B cell (primary cell): ENCODE measurements at regions of chr11 and their contacts with region 1.

Region 1: DNA sequence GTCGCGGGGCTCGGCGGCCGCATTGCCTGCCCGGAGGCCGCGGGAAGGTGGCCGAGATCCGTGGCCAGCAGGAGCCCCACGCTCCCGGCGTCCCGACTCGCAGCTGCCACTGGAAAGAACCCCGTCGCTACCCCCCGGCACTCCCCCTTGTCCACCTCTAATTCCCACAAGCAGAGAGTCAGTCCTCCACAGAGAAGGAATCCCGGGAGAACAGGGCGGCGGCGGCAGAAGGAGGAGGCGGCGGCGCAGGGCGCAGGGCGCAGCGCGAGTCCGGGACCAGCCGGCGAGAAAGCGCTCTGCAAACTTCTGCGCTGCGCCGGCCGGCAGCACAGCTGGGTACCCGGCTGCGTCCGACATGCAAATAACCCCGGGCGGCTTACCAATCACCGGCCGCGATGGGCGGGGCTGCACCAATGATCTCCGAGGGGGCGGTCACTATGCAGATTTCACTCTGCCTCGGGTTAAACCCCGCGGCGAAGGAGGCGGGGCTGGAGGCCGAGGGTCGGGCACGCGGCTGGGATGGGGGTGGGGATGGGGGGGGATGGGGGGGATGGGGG is at the start of gene ABTB2:
- DNase-seq: peak; percentile 96
- ATAC-seq: peak; percentile 89
- H3K4me3 ChIP-seq: peak within 1 kb of the TSS; percentile 56 to 70 (median 66)
- H3K4me3 Mint-ChIP-seq: peak within 1 kb of the TSS; percentile 90
- H3K27ac ChIP-seq: peak within 1 kb of the TSS in 1 of 2 donors; percentile 43
- H3K27ac Mint-ChIP-seq: peak within 1 kb of the TSS; percentile 88
- H3K4me1 ChIP-seq: peaks cover 18 to 33% of the 10 kb centered on the region in 2 donors
- H3K4me1 Mint-ChIP-seq: peaks cover 28% of the 10 kb centered on the region
- H3K27me3 ChIP-seq: peaks cover 0 to 49% (median 41%) of the 10 kb centered on the region in 4 experiments
- H3K27me3 Mint-ChIP-seq: peaks cover 54% of the 10 kb centered on the region
- CTCF ChIP-seq: no peak
- total RNA-seq, gene ABTB2: 4.5 and 5.9 TPM in 2 replicates

Region 2: DNA sequence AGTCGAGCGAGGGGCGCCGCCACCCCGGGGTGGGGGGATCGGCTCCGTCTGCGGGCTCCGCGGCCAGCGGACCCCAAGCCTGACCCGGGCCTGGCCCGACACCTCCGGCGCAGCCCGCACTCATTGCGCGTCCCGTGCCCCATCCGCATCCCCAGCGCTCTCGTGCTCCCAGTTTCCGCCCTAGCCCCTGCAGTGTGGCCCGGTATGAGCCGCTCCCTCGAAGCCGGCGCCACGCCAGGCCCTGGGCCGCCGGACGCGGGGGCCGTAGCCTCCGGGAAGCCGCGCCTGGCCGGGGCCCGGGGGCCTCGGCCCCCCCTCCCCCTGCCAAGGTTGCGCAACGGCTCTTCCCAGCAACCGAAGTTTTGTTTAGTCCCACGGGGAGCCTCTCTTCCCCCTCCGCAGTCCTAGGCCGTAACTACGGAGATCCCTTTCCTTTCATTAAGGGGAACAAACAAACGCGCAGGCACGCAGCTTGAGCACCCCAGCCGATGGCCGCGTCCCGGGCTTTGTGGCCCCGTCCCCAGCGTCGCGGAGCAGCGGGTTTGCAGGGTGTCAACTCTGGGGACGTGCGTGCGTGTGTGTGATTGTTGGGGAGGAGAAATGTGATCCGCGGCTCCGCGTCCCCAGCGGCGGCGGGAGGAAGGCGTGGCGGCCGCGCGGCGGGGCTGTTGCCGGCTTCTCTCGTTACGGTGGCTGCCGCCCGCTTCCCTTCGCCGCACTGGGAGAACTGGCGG is 1099.7 kb before region 1 on chr11:
- CTCF ChIA-PET with region 1: no interaction called
- POLR2A ChIA-PET with region 1: no interaction called
- intact Hi-C with region 1: loop called (anchors 5 kb)
- DNase-seq: peak; percentile 86
- ATAC-seq: peak; percentile 34
- H3K4me3 ChIP-seq: peak overlapping the region; percentile 78 to 97 (median 90)
- H3K4me3 Mint-ChIP-seq: peak overlapping the region; percentile 93
- H3K27ac ChIP-seq: peak overlapping the region; percentile 98 to 99
- H3K27ac Mint-ChIP-seq: peak overlapping the region; percentile 100
- H3K4me1 ChIP-seq: peaks cover 22 to 26% of the 10 kb centered on the region in 2 donors
- H3K4me1 Mint-ChIP-seq: peaks cover 49% of the 10 kb centered on the region
- H3K27me3 ChIP-seq: no peaks in the 10 kb centered on the region
- H3K27me3 Mint-ChIP-seq: no peaks in the 10 kb centered on the region
- CTCF ChIP-seq: no peak

Region 3: DNA sequence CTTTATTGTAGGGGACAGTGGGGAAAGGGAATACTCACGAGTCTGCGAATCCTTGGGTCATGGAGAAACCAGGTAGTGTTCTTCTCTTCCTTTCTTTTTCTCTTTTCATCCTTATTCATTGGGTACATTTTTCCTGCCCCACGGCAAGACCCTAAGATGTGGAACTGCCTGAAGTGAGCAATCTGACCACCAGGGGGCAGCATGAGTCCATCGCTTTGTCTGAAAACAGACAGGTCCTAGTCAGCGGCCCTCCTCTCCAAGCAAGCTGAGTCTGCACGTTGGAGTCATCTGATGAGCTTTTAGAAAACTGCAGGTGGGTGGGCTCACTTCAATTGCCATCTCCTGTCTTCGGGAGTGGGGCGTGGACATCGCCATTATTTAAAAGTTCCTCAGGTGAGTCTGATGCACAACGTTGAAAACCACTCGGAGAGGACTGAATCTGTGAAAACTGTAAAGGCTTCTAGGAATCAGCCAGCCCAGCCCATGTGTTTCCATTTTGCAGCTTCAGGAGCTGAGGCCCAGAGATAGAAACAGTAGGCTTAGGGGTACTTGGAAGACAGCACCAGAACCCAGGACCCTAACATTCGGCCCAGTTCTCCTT is 549.5 kb before region 1 on chr11:
- CTCF ChIA-PET with region 1: interaction called, 3 read pairs
- POLR2A ChIA-PET with region 1: no interaction called
- intact Hi-C with region 1: loop called (anchors 1 kb)
- DNase-seq: peak; percentile 85
- ATAC-seq: peak; percentile 95
- H3K4me3 ChIP-seq: no peak overlapping the region
- H3K4me3 Mint-ChIP-seq: no peak overlapping the region
- H3K27ac ChIP-seq: no peak overlapping the region
- H3K27ac Mint-ChIP-seq: no peak overlapping the region
- H3K4me1 ChIP-seq: no peaks in the 10 kb centered on the region
- H3K4me1 Mint-ChIP-seq: no peaks in the 10 kb centered on the region
- H3K27me3 ChIP-seq: peaks cover 0 to 6% (median 1%) of the 10 kb centered on the region in 4 experiments
- H3K27me3 Mint-ChIP-seq: peaks cover 21% of the 10 kb centered on the region
- CTCF ChIP-seq: peak; percentile 95

Region 4: DNA sequence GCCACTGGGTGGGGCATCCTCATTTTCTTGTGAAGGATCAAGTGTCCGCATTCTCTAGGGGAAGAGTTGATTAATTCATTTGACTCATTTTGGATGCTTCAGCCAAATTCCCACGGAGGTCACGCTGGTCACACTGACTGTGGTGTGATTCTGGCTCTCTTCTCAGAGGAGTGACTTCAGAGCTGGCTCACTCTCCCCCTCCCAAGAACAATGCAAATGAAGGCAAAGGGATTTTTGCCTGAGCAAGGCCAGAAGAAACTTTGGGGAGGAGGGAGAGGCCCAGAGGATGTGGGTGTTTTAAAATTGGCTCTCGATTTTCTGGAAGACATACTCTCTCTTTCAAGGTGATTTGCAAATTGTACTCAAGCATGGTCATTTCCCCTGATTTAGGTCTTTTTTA is 414.8 kb before region 1 on chr11:
- CTCF ChIA-PET with region 1: no interaction called
- POLR2A ChIA-PET with region 1: no interaction called
- intact Hi-C with region 1: no loop called
- DNase-seq: no peak
- ATAC-seq: no peak
- H3K4me3 ChIP-seq: no peak overlapping the region
- H3K4me3 Mint-ChIP-seq: no peak overlapping the region
- H3K27ac ChIP-seq: no peak overlapping the region
- H3K27ac Mint-ChIP-seq: no peak overlapping the region
- H3K4me1 ChIP-seq: peaks cover 13 to 25% of the 10 kb centered on the region in 2 donors
- H3K4me1 Mint-ChIP-seq: peaks cover 30% of the 10 kb centered on the region
- H3K27me3 ChIP-seq: no peaks in the 10 kb centered on the region
- H3K27me3 Mint-ChIP-seq: peaks cover 4% of the 10 kb centered on the region
- CTCF ChIP-seq: no peak

Region 5: GRCh38 chr11:34051349-34052035 is 306.3 kb before region 1 on chr11 and contains the start of gene CAPRIN1:
- CTCF ChIA-PET with region 1: no interaction called
- POLR2A ChIA-PET with region 1: no interaction called
- intact Hi-C with region 1: loop called (anchors 1 kb)
- DNase-seq: peak; percentile 94
- ATAC-seq: peak; percentile 67
- H3K4me3 ChIP-seq: peak within 1 kb of the TSS; percentile 90 to 98 (median 95)
- H3K4me3 Mint-ChIP-seq: peak within 1 kb of the TSS; percentile 97
- H3K27ac ChIP-seq: peak within 1 kb of the TSS; percentile 99 to 100
- H3K27ac Mint-ChIP-seq: peak within 1 kb of the TSS; percentile 96
- H3K4me1 ChIP-seq: peaks cover 27 to 30% of the 10 kb centered on the region in 2 donors
- H3K4me1 Mint-ChIP-seq: peaks cover 28% of the 10 kb centered on the region
- H3K27me3 ChIP-seq: no peaks in the 10 kb centered on the region
- H3K27me3 Mint-ChIP-seq: no peaks in the 10 kb centered on the region
- CTCF ChIP-seq: no peak
- total RNA-seq, gene CAPRIN1: 132 and 133 TPM in 2 replicates

Region 6: GRCh38 chr11:34234086-34234740 is 123.6 kb before region 1 on chr11:
- CTCF ChIA-PET with region 1: interaction called, 6 read pairs
- POLR2A ChIA-PET with region 1: no interaction called
- intact Hi-C with region 1: loop called (anchors 1 kb)
- DNase-seq: peak; percentile 87
- ATAC-seq: peak; percentile 93
- H3K4me3 ChIP-seq: no peak overlapping the region
- H3K4me3 Mint-ChIP-seq: peak overlapping the region; percentile 69
- H3K27ac ChIP-seq: peak overlapping the region; percentile 50 to 64
- H3K27ac Mint-ChIP-seq: peak overlapping the region; percentile 84
- H3K4me1 ChIP-seq: peaks cover 15 to 23% of the 10 kb centered on the region in 2 donors
- H3K4me1 Mint-ChIP-seq: peaks cover 41% of the 10 kb centered on the region
- H3K27me3 ChIP-seq: no peaks in the 10 kb centered on the region
- H3K27me3 Mint-ChIP-seq: no peaks in the 10 kb centered on the region
- CTCF ChIP-seq: no peak

Region 7: GRCh38 chr11:34318111-34319037 is 39.4 kb before region 1 on chr11:
- CTCF ChIA-PET with region 1: no interaction called
- POLR2A ChIA-PET with region 1: no interaction called
- intact Hi-C with region 1: no loop called
- DNase-seq: no peak
- ATAC-seq: no peak
- H3K4me3 ChIP-seq: no peak overlapping the region
- H3K4me3 Mint-ChIP-seq: no peak overlapping the region
- H3K27ac ChIP-seq: no peak overlapping the region
- H3K27ac Mint-ChIP-seq: no peak overlapping the region
- H3K4me1 ChIP-seq: no peaks in the 10 kb centered on the region
- H3K4me1 Mint-ChIP-seq: peaks cover under 1% of the 10 kb centered on the region
- H3K27me3 ChIP-seq: no peaks in the 10 kb centered on the region
- H3K27me3 Mint-ChIP-seq: no peaks in the 10 kb centered on the region
- CTCF ChIP-seq: no peak

Region 8: GRCh38 chr11:34407121-34407786 is 49.5 kb after region 1 on chr11:
- CTCF ChIA-PET with region 1: no interaction called
- POLR2A ChIA-PET with region 1: no interaction called
- intact Hi-C with region 1: no loop called
- DNase-seq: no peak
- ATAC-seq: no peak
- H3K4me3 ChIP-seq: no peak overlapping the region
- H3K4me3 Mint-ChIP-seq: no peak overlapping the region
- H3K27ac ChIP-seq: no peak overlapping the region
- H3K27ac Mint-ChIP-seq: no peak overlapping the region
- H3K4me1 ChIP-seq: no peaks in the 10 kb centered on the region
- H3K4me1 Mint-ChIP-seq: peaks cover 2% of the 10 kb centered on the region
- H3K27me3 ChIP-seq: peaks cover 0 to 5% (median 0%) of the 10 kb centered on the region in 4 experiments
- H3K27me3 Mint-ChIP-seq: peaks cover 40% of the 10 kb centered on the region
- CTCF ChIP-seq: no peak

Region 9: DNA sequence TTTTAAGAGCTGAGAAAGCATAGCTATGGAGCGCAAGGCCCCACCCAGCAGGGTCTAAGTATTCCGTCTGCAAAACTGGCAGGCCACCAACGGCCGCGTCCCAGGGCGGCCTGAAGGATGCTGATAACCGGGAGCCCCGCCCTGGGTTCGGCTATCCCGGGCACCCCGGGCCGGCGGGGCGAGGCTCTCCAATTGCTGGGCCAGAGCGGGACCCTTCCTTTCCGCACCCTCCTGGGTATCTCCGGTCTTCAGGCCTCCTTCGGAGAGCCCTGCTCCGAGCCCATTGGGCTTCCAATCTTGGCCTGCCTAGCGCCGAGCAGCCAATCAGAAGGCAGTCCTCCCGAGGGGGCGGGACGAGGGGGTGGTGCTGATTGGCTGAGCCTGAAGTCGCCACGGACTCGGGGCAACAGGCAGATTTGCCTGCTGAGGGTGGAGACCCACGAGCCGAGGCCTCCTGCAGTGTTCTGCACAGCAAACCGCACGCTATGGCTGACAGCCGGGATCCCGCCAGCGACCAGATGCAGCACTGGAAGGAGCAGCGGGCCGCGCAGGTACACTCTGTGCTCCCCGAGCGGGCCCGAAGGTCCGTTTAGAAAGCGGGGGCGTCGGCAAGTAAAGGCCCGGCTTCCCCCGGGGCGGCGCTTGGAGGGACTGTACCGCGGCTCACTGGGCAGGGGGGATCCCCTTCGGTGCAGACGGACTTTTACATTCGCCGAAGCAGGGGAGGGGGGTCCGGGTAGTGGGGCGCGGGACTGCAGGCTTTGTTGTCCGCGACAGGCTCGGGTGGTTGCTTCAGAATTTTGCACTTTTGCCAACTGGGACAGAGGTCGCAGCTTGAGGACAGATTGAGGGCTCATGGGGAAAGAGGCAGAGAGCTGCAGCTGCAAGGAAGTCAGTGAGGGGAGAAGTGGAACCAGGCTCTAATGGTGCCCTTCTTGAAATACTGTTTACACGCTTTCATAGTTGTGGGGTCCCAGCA is 81.0 kb after region 1 on chr11 and contains the start of gene CAT:
- CTCF ChIA-PET with region 1: interaction called, 5 read pairs
- POLR2A ChIA-PET with region 1: no interaction called
- intact Hi-C with region 1: loop called (anchors 1 kb)
- DNase-seq: peak; percentile 96
- ATAC-seq: peak; percentile 92
- H3K4me3 ChIP-seq: peak within 1 kb of the TSS; percentile 82 to 98 (median 88)
- H3K4me3 Mint-ChIP-seq: peak within 1 kb of the TSS; percentile 99
- H3K27ac ChIP-seq: peak within 1 kb of the TSS; percentile 75 to 85
- H3K27ac Mint-ChIP-seq: peak within 1 kb of the TSS; percentile 98
- H3K4me1 ChIP-seq: peaks cover 27 to 39% of the 10 kb centered on the region in 2 donors
- H3K4me1 Mint-ChIP-seq: peaks cover 44% of the 10 kb centered on the region
- H3K27me3 ChIP-seq: no peaks in the 10 kb centered on the region
- H3K27me3 Mint-ChIP-seq: no peaks in the 10 kb centered on the region
- CTCF ChIP-seq: no peak
- total RNA-seq, gene CAT: 83.2 and 88.8 TPM in 2 replicates